Activated CD4-positive, alpha-beta T cell treated with anti-CD3 and anti-CD28 coated beads for 36 hours (primary cell): ENCODE measurements at regions of chr9 and their contacts with region 1.

Region 1: DNA sequence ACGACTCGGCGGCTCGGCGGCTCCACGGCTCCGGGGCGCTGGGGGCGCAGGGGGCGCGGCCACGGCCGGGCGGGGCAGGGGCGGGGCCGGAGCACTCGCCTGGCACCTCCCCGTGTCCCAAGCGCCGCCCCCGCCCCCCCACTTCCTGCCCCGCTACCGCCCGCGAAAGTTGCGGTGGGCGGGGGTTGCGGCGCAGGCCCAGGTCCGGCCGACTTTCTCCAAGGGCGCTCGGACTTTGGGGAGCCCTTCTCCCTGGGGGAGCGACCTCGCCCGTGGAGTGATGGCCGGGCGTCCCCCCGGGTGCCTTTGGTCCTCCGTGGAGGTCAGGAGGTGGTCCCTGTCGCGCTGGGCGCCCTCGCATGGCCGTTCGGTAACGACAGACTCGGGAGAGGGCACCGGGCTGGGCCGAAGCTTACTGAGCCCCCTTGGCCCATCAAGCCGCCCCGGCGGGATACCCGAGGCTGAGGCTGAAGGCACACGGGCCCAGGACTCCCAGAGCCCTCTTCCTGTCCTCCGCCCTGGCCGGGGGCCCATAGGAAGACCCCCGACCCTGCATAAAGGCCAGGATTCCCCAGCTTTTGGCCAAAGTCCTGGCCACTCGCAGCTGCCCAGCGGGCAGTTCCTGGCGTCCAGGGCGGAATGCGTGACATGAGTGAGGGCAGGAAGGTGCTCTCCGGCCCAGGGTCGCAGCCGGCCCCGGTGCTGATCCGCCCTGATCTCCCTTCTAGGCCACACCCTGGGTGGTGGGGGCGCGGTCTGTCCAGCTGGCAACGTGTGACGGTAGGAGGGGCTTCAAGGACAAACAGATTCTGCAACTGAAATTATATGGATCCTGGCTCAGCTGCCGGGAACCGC is 883 bp upstream of the VAV2 start:
- DNase-seq: peak; percentile 88
- ATAC-seq: peak; percentile 75
- H3K4me3 Mint-ChIP-seq: peak overlapping the region; percentile 61
- H3K27ac Mint-ChIP-seq: no peak overlapping the region
- H3K4me1 Mint-ChIP-seq: peaks cover 2% of the 10 kb centered on the region
- H3K27me3 Mint-ChIP-seq: peaks cover 3% of the 10 kb centered on the region

Region 2: DNA sequence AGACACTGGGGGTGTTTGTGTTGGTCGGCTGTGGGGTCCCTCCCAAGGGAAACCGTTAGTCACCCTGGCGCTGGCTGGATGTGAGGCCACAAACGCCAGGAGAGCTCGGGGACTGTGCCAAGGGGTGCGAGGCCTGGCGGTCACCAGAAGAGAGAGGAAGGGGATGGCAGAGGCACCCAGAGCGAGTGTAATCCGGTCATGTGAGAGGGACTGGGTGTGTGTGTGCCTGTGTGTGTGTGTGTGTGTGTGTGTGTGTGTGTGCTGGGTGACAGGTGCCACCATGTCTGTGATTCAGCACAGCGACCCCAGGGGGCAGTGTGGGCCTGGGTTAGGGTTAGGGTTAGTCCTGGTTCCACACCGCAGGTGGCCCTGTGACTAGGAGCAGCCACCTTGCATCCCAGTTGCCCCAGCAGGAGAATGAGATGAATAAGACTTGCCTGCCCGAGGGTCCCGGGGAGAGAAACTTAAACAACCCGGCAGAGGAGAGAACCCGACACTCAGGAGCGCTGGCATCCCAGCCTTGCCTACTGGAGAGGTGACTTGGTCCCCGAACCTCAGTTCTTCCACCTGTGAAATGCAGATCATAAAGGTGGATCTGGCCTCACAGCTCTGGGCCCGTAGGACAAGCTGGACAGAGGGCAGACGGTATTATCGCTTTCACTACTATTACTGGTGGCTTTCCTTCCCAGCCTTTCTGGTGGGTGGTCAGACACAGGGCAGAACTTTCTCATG is 459.9 kb before region 1 on chr9:
- CTCF ChIA-PET with region 1: no interaction called
- POLR2A ChIA-PET with region 1: no interaction called
- intact Hi-C with region 1: loop called in 1 of 2 experiments (anchors 1 kb)
- DNase-seq: peak; percentile 89
- ATAC-seq: peak; percentile 82
- H3K4me3 Mint-ChIP-seq: peak overlapping the region; percentile 16
- H3K27ac Mint-ChIP-seq: no peak overlapping the region
- H3K4me1 Mint-ChIP-seq: peaks cover 15% of the 10 kb centered on the region
- H3K27me3 Mint-ChIP-seq: peaks cover 4% of the 10 kb centered on the region

Region 3: DNA sequence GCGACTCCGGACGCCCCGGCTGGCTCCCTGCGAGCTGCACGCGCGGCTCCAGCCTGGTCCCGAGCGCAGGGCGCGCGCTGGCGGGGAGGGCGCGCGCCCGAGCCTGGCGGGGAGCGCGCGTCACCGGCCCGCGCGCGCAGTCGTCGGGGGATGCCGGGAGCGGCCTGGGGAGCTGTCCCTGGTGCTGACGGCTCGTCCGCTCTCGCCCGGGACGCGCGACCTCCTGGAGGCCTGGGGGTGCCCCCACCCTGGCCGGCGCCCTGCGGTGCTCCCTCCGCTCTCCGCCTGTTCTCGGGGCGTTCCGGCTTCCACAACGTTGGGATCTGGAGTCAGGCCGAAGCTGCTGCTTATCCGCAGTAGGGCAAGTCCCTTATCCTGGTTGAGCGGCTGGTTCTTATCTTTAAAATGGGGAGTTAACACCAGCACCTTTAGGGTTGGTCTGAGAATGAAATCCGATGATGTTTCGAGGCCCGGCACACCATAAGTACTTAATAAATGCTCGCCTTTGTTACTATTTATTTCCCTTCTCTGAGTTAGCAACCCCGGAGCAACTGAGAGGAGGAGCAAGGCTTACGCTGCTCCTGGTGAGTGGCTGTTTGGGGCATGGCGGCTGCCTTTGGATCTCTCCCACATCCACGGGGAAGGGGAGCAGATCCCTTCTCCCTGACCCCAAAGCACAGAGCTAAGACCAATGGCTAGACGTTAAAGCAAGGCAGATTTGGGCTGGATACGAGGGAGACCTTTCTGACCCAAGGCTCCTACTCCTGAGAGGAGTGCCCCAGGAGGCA is 383.5 kb before region 1 on chr9 and contains the start of gene FAM163B:
- CTCF ChIA-PET with region 1: no interaction called
- POLR2A ChIA-PET with region 1: no interaction called
- intact Hi-C with region 1: loop called in 1 of 2 experiments (anchors 5 kb)
- DNase-seq: peak; percentile 75
- ATAC-seq: peak; percentile 61
- H3K4me3 Mint-ChIP-seq: no peak within 1 kb of the TSS
- H3K27ac Mint-ChIP-seq: no peak within 1 kb of the TSS
- H3K4me1 Mint-ChIP-seq: peaks cover 4% of the 10 kb centered on the region
- H3K27me3 Mint-ChIP-seq: peaks cover 16% of the 10 kb centered on the region
- total RNA-seq, gene FAM163B: not detected

Region 4: GRCh38 chr9:133792721-133793470 is 200.1 kb before region 1 on chr9:
- CTCF ChIA-PET with region 1: interaction called, 29 read pairs
- POLR2A ChIA-PET with region 1: no interaction called
- intact Hi-C with region 1: loop called (anchors 1 kb)
- DNase-seq: peak; percentile 70
- ATAC-seq: peak; percentile 75
- H3K4me3 Mint-ChIP-seq: no peak overlapping the region
- H3K27ac Mint-ChIP-seq: no peak overlapping the region
- H3K4me1 Mint-ChIP-seq: peaks cover 3% of the 10 kb centered on the region
- H3K27me3 Mint-ChIP-seq: peaks cover 1% of the 10 kb centered on the region

Region 5: GRCh38 chr9:134024828-134025605 is 32.0 kb after region 1 on chr9 and contains the start of gene BRD3OS:
- CTCF ChIA-PET with region 1: interaction called, 10 read pairs
- POLR2A ChIA-PET with region 1: no interaction called
- intact Hi-C with region 1: loop called in 1 of 2 experiments (anchors 1 kb)
- DNase-seq: peak; percentile 96
- ATAC-seq: peak; percentile 91
- H3K4me3 Mint-ChIP-seq: peak within 1 kb of the TSS; percentile 74
- H3K27ac Mint-ChIP-seq: no peak within 1 kb of the TSS
- H3K4me1 Mint-ChIP-seq: peaks cover 4% of the 10 kb centered on the region
- H3K27me3 Mint-ChIP-seq: no peaks in the 10 kb centered on the region
- total RNA-seq, gene BRD3OS: 15.1 to 18.0 TPM

Region 6: DNA sequence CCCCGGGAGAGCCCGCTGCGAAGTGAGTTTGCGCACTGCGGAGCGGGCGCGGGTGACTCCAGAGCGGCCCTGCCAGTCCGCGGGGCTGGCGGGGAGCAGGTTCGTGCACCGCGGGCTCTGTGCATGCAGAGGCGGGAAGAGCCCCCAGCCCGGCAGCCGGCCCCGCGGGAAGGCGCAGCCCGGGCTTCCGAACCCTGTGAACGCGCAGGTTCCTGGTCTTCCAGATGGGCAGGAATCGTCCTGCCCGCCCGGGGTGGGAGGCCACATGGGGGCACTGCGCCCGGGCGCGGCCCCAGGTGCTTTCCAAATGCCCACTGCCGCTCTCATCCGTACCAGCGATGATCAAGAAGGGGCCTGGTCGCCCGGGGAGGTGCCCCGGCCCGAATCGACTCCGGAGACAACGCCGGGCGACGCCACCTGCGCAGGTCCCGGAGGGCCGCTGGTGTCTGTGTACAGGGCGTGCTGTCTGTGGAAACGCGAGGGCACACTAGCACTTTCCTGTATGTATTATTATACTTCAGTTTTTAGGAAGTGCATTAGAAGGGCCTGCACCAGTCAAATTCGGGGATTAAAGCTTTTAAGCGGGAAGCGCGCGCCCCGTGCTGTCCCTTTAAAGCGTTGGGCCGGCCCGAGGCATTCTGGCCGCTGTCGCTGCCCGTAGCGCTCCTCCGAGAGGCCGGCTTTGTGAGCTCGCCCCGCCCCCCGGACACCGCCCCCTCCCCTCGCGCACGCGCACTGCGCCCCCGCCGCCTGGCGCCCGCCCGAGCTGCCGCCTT is 142.5 kb after region 1 on chr9 and contains the start of gene WDR5:
- CTCF ChIA-PET with region 1: no interaction called
- POLR2A ChIA-PET with region 1: no interaction called
- intact Hi-C with region 1: loop called in 1 of 2 experiments (anchors 1 kb)
- DNase-seq: peak; percentile 95
- ATAC-seq: peak; percentile 78
- H3K4me3 Mint-ChIP-seq: peak within 1 kb of the TSS; percentile 98
- H3K27ac Mint-ChIP-seq: peak within 1 kb of the TSS; percentile 90
- H3K4me1 Mint-ChIP-seq: peaks cover 31% of the 10 kb centered on the region
- H3K27me3 Mint-ChIP-seq: no peaks in the 10 kb centered on the region
- total RNA-seq, gene WDR5: 51.4 to 59.2 TPM